Activated CD4-positive, alpha-beta memory T cell treated with anti-CD3 and anti-CD28 coated beads for 36 hours (primary cell): ENCODE measurements at regions of chr3 and their contacts with region 1.

Region 1: GRCh38 chr3:115692887-115693524 is 69.7 kb downstream of the GAP43 start:
- DNase-seq: peak; percentile 78
- H3K4me3 Mint-ChIP-seq: no peak overlapping the region
- H3K27ac Mint-ChIP-seq: no peak overlapping the region
- H3K4me1 Mint-ChIP-seq: no peaks in the 10 kb centered on the region
- H3K27me3 Mint-ChIP-seq: no peaks in the 10 kb centered on the region

Region 2: DNA sequence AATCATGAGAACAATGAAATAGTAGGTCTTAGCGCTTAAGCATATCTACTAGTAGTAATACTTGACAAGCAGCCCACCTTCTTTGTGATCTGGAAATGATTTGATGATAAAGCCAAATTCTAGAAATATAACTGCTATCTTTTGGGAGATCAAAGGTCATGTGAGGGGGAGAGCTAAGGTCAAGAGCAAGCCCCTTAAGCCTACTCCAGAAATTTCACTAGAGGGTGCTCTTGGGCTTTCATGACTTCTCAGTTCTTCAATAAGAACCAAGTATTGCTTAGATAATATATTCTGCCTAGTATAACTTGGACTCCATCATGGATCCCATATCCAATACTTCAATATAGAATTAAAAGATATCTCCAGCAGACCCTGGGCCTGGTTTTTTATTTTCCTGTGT is 865.5 kb before region 1 on chr3:
- CTCF ChIA-PET with region 1: interaction called, 4 read pairs
- POLR2A ChIA-PET with region 1: no interaction called
- intact Hi-C with region 1: loop called (anchors 5 kb)
- DNase-seq: no peak
- H3K4me3 Mint-ChIP-seq: no peak overlapping the region
- H3K27ac Mint-ChIP-seq: no peak overlapping the region
- H3K4me1 Mint-ChIP-seq: peaks cover 4% of the 10 kb centered on the region
- H3K27me3 Mint-ChIP-seq: no peaks in the 10 kb centered on the region

Region 3: DNA sequence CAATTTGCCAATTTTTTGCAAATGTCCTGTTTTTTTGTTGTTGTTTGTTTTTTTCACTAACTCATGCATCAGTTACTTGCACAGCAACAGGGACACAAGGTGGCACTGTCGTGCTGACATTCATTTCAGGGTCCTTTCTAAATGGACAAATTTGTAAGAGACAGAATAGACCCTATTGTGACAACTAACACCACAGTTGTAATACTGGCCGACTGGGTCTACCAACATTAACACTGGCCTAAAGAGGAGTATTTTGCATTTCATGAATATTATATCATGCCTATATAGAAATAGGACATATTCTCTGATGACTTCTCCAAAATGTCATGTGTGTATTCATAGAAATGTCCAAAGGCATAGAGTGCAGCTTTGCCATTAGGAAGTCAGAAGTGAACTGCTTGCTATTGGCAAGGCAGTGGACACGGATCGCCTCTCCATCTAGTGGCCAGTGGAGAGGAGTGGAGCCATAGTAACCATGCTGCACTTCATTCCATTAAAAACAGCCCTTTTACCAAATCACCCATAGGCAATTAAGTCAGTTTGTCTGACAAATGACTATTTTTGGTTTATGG is 600.7 kb before region 1 on chr3:
- CTCF ChIA-PET with region 1: interaction called, 15 read pairs
- POLR2A ChIA-PET with region 1: no interaction called
- intact Hi-C with region 1: loop called (anchors 2 kb)
- DNase-seq: peak; percentile 65
- H3K4me3 Mint-ChIP-seq: no peak overlapping the region
- H3K27ac Mint-ChIP-seq: no peak overlapping the region
- H3K4me1 Mint-ChIP-seq: peaks cover 13% of the 10 kb centered on the region
- H3K27me3 Mint-ChIP-seq: no peaks in the 10 kb centered on the region

Region 4: DNA sequence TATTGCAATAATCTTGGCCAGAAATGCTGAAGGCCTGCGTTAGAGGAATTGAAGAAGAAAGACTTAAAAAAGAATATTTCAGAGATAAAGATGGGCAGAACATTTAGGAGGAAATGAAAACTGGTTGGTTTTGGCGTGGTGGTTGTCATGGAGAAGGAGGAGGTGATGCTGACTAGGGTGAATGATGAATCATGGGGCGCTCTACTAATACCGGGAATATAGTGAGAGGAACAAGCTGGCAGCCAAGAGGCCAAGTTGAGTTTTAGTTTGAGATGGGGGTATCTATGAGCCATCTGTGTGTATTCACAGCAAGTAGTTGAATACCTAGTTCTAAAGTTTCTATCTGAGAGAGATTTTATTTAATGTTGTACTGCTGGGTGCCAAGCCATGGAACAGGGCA is 76.5 kb before region 1 on chr3:
- CTCF ChIA-PET with region 1: no interaction called
- POLR2A ChIA-PET with region 1: no interaction called
- intact Hi-C with region 1: loop called (anchors 2 kb)
- DNase-seq: peak; percentile 67
- H3K4me3 Mint-ChIP-seq: no peak overlapping the region
- H3K27ac Mint-ChIP-seq: no peak overlapping the region
- H3K4me1 Mint-ChIP-seq: peaks cover 23% of the 10 kb centered on the region
- H3K27me3 Mint-ChIP-seq: peaks cover 10% of the 10 kb centered on the region

Region 5: DNA sequence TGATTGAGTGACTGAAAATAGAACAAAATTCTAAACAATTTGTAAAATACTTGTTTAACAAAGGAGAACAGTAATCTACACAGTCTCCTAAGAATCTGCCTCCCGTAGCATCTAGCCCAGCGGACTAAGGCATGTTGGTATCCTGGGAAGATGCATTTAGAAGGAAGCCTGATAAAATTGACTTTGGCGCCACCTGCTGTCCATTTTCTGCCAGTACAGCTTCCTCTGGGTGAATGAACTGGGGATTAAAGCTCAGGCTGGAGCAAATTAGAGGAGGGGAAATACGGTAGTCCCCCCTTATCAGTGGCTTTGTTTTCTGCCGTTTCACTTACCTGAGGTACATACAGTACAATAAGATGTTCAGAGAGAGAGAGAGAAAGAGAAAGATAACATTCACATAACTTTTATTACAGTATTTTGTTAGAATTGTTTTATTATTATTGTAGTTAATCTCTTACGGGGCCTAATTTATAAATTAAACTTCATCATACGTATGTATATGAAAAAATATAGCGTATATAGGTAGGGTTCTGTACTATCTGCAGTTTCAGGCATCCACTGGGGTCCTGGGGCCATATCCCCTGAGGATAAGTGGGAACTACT is 121.9 kb after region 1 on chr3:
- CTCF ChIA-PET with region 1: interaction called, 10 read pairs
- POLR2A ChIA-PET with region 1: no interaction called
- intact Hi-C with region 1: loop called (anchors 2 kb)
- DNase-seq: peak; percentile 78
- H3K4me3 Mint-ChIP-seq: no peak overlapping the region
- H3K27ac Mint-ChIP-seq: no peak overlapping the region
- H3K4me1 Mint-ChIP-seq: no peaks in the 10 kb centered on the region
- H3K27me3 Mint-ChIP-seq: peaks cover 2% of the 10 kb centered on the region